ENCODE measurements at regions of chr16 and their contacts with region 1.

Region 1: DNA sequence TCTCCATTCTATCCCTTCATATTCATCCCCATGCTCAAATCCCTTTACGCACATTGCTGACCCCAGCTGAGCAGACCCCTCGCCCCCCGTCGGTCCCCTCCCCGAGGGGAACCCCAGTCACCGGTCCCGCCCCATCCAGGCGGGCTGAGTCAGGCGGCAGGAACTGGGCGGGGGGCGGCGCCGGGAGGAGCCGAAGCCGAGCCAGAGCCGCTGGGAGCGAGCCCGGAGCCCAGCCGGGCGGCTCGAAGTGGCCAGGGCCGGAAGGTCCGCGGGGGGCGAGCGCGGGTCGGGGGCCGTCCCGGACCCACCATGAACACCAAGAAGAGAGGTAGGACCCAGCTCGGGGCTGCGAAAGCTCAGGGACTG is 8.6 kb downstream of the RIPOR1 start:
- DNase-seq: peak in 1 of 2 experiments; percentile 71
- H3K4me3 ChIP-seq: peak overlapping the region; percentile 40 to 73 (median 49)
- H3K27ac ChIP-seq: no peak overlapping the region
- H3K4me1 ChIP-seq: peaks cover 0 to 11% (median 6%) of the 10 kb centered on the region in 4 experiments; a peak in 5 of 7 replicates
- H3K27me3 ChIP-seq: peaks cover 47 to 93% (median 88%) of the 10 kb centered on the region in 4 experiments
- CTCF ChIP-seq: no peak
- EP300 ChIP-seq: no peak
- POLR2A ChIP-seq: no peak
- RAD21 ChIP-seq: no peak

Region 2: GRCh38 chr16:67499106-67499505 is 38.1 kb before region 1 on chr16:
- CTCF ChIA-PET with region 1: interaction called, 10 read pairs
- POLR2A ChIA-PET with region 1: no interaction called
- DNase-seq: no peak
- H3K4me3 ChIP-seq: no peak overlapping the region
- H3K27ac ChIP-seq: no peak overlapping the region
- H3K4me1 ChIP-seq: no peaks in the 10 kb centered on the region
- H3K27me3 ChIP-seq: peaks cover 0 to 15% (median 12%) of the 10 kb centered on the region in 4 experiments; a peak in 4 of 7 replicates
- CTCF ChIP-seq: no peak
- EP300 ChIP-seq: no peak
- POLR2A ChIP-seq: no peak
- RAD21 ChIP-seq: no peak

Region 3: DNA sequence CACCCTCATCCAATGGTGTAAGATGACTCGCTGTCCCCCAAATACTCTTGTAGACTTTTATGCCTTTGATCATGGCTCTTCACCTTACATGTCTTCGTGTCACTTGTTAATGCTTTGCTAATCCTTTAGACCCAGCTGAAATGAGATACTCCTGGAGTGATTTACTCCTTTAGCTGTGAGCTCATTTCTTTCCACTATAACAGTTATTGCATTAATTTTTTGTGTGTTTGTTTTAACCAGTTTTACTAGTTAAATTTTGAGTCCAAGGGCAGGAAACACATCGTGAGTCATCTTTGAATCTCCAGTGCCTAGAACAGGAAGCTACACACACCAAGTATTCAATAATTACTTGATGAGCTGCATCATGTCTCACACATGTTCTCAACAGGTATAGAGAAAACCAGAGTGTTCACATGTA is 18.6 kb after region 1 on chr16:
- CTCF ChIA-PET with region 1: interaction called, 10 read pairs
- POLR2A ChIA-PET with region 1: interaction called, 27 read pairs
- DNase-seq: no peak
- H3K4me3 ChIP-seq: no peak overlapping the region
- H3K27ac ChIP-seq: no peak overlapping the region
- H3K4me1 ChIP-seq: peaks cover 0 to under 1% (median 0%) of the 10 kb centered on the region in 4 experiments; a peak in 1 of 7 replicates
- H3K27me3 ChIP-seq: no peaks in the 10 kb centered on the region
- CTCF ChIP-seq: no peak
- EP300 ChIP-seq: no peak
- POLR2A ChIP-seq: no peak
- RAD21 ChIP-seq: no peak

Region 4: GRCh38 chr16:67606632-67607031 is 69.4 kb after region 1 on chr16:
- CTCF ChIA-PET with region 1: no interaction called
- POLR2A ChIA-PET with region 1: no interaction called
- DNase-seq: no peak
- H3K4me3 ChIP-seq: no peak overlapping the region
- H3K27ac ChIP-seq: no peak overlapping the region
- H3K4me1 ChIP-seq: no peaks in the 10 kb centered on the region
- H3K27me3 ChIP-seq: no peaks in the 10 kb centered on the region
- CTCF ChIP-seq: no peak
- EP300 ChIP-seq: no peak
- POLR2A ChIP-seq: no peak
- RAD21 ChIP-seq: no peak

Region 5: GRCh38 chr16:67660564-67661028 is 123.3 kb after region 1 on chr16 and contains the start of gene PARD6A:
- CTCF ChIA-PET with region 1: interaction called, 11 read pairs
- POLR2A ChIA-PET with region 1: interaction called, 6 read pairs
- DNase-seq: peak; percentile 93 to 94
- H3K4me3 ChIP-seq: peak within 1 kb of the TSS; percentile 86 to 98 (median 89)
- H3K27ac ChIP-seq: peak within 1 kb of the TSS; percentile 81
- H3K4me1 ChIP-seq: peaks cover 0 to 18% (median 10%) of the 10 kb centered on the region in 4 experiments; a peak in 5 of 7 replicates
- H3K27me3 ChIP-seq: peaks cover 0 to 2% (median 0%) of the 10 kb centered on the region in 4 experiments; a peak in 1 of 7 replicates
- CTCF ChIP-seq: 0 out of 4 replicates have a peak, but pooled peaks of 1 of the 3 experiments have one; percentile 5
- EP300 ChIP-seq: no peak
- POLR2A ChIP-seq: peak in 1 of 2 experiments; percentile 16; a peak in 1 of 3 replicates
- RAD21 ChIP-seq: no peak
- total RNA-seq, gene PARD6A: 14.4 and 15.1 TPM in 2 replicates

Region 6: DNA sequence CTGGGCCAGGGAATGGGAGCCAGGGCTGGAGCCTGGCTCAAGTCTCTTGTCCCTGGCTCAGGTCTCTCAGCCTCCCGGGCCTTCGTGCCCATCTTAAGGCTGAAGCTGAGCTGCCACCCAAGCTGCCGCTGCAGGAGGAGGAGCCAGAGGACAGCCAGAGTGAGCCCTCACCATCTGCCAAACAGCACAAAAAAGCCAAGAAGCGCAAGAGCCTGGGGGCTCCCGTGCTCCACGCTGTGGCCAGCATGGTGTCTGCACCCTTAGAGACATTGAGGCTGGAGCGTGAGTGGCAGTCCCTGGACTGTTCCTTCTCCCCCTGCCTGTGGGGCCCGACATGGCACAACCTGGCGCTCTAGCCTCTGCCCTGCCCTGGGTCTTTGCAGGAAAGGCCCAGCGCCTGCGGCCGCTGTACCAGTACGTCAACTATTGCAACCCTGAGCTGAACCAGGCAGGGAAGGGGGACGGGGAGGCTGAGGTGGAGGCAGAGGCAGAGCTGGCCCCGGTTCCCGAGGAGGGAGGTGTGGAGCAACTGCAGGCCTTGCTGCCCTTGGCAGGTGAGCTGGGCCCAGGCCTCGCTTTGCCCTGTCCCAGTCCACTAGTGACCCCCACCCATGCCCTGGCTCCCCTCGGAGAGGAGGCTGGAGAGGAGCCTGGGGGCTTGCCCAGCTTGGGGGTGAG is 130.7 kb after region 1 on chr16:
- CTCF ChIA-PET with region 1: interaction called, 14 read pairs
- POLR2A ChIA-PET with region 1: interaction called, 6 read pairs
- DNase-seq: peak; percentile 81 to 82
- H3K4me3 ChIP-seq: no peak overlapping the region; a peak in 1 of 8 replicates
- H3K27ac ChIP-seq: no peak overlapping the region
- H3K4me1 ChIP-seq: peaks cover 0 to 25% (median 15%) of the 10 kb centered on the region in 4 experiments; a peak in 5 of 7 replicates
- H3K27me3 ChIP-seq: peaks cover 0 to 3% (median 0%) of the 10 kb centered on the region in 4 experiments; a peak in 2 of 7 replicates
- CTCF ChIP-seq: peak in 2 of 3 experiments; percentile 87 to 96; a peak in 3 of 4 replicates
- EP300 ChIP-seq: no peak
- POLR2A ChIP-seq: no peak
- RAD21 ChIP-seq: peak; percentile 50 to 68

Measured in H1 (cell line).